Transverse colon (tissue), 4 donors: ENCODE measurements at regions of chr9 and their contacts with region 1.

Region 1: GRCh38 chr9:114282926-114283325 is 40.0 kb upstream of the ORM1 start:
- DNase-seq: no peak
- H3K4me3 ChIP-seq: no peak overlapping the region
- H3K27ac ChIP-seq: no peak overlapping the region
- H3K4me1 ChIP-seq: no peaks in the 10 kb centered on the region
- H3K27me3 ChIP-seq: no peaks in the 10 kb centered on the region
- CTCF ChIP-seq: no peak
- EP300 ChIP-seq: no peak
- POLR2A ChIP-seq: no peak

Region 2: GRCh38 chr9:114072184-114073140 is 210.5 kb before region 1 on chr9:
- in situ Hi-C with region 1: loop called in 1 of 4 experiments (anchors 25 kb)
- intact Hi-C with region 1: loop called (anchors 1 kb)
- DNase-seq: peak; percentile 45
- H3K4me3 ChIP-seq: no peak overlapping the region
- H3K27ac ChIP-seq: no peak overlapping the region
- H3K4me1 ChIP-seq: peaks cover 0 to 9% (median 4%) of the 10 kb centered on the region in 4 donors
- H3K27me3 ChIP-seq: peaks cover 3% of the 10 kb centered on the region
- CTCF ChIP-seq: no peak
- EP300 ChIP-seq: no peak
- POLR2A ChIP-seq: no peak

Region 3: GRCh38 chr9:114082017-114082762 is 200.7 kb before region 1 on chr9:
- in situ Hi-C with region 1: loop called in 2 of 4 experiments (anchors 10 to 25 kb)
- intact Hi-C with region 1: no loop called
- DNase-seq: peak; percentile 92
- H3K4me3 ChIP-seq: no peak overlapping the region
- H3K27ac ChIP-seq: peak overlapping the region; percentile 60 to 78 (median 77)
- H3K4me1 ChIP-seq: peaks cover 5 to 32% (median 24%) of the 10 kb centered on the region in 4 donors
- H3K27me3 ChIP-seq: no peaks in the 10 kb centered on the region
- CTCF ChIP-seq: peak; percentile 90 to 94 (median 92)
- EP300 ChIP-seq: no peak
- POLR2A ChIP-seq: no peak

Region 4: GRCh38 chr9:114108016-114108833 is 174.7 kb before region 1 on chr9:
- in situ Hi-C with region 1: loop called in 1 of 4 experiments (anchors 10 kb)
- intact Hi-C with region 1: no loop called
- DNase-seq: peak; percentile 83
- H3K4me3 ChIP-seq: no peak overlapping the region
- H3K27ac ChIP-seq: no peak overlapping the region
- H3K4me1 ChIP-seq: peaks cover 0 to 5% (median 0%) of the 10 kb centered on the region in 4 donors
- H3K27me3 ChIP-seq: peaks cover 7% of the 10 kb centered on the region
- CTCF ChIP-seq: peak; percentile 85 to 94 (median 88)
- EP300 ChIP-seq: no peak
- POLR2A ChIP-seq: no peak

Region 5: DNA sequence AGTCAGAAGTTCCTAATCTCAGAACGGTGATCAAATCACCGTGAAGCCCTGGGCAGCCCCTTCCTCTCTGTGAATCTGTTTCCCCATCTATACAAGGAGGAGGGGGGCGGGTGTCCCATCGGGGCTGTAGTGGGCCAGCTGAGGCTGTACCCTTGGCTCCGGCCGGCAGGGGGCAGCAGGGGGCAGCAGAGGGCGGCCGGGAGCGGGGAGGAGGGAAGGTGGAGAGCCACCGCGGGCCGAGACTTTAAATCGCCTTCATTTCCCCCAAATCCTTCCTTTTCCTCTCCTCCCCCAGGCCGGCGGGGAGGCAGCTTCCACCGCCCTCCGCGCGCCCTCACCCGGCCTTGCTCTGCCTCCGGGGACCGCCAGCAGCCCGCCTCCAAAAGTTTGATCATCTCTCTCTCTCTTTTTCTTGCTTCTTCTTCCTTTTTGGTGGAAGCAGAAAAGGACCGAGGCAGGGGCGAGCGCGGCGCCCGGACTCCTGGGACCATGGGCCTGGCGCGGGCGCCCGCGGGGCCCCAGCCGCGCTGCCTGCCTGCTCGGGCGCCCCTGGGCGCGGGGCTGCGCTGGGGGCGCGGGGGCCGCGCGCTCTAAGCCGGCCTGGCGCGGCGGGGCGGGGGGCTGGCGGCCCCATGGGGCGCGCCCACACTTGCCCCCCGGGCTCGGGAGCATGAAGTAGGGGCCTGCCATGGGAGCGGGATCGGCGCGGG is 127.5 kb before region 1 on chr9 and contains the start of gene COL27A1:
- in situ Hi-C with region 1: loop called in 1 of 4 experiments (anchors 10 kb)
- intact Hi-C with region 1: no loop called
- DNase-seq: peak; percentile 82
- H3K4me3 ChIP-seq: peak within 1 kb of the TSS; percentile 34 to 68 (median 53)
- H3K27ac ChIP-seq: peak within 1 kb of the TSS; percentile 65 to 77 (median 72)
- H3K4me1 ChIP-seq: peaks cover 11 to 24% (median 16%) of the 10 kb centered on the region in 4 donors
- H3K27me3 ChIP-seq: peaks cover 38% of the 10 kb centered on the region
- CTCF ChIP-seq: peak; percentile 87 to 96 (median 92)
- EP300 ChIP-seq: no peak
- POLR2A ChIP-seq: no peak
- total RNA-seq, gene COL27A1: 2.1 to 9.0 (median 3.8) TPM